ENCODE measurements at regions of chr5 and their contacts with region 1.

Region 1: DNA sequence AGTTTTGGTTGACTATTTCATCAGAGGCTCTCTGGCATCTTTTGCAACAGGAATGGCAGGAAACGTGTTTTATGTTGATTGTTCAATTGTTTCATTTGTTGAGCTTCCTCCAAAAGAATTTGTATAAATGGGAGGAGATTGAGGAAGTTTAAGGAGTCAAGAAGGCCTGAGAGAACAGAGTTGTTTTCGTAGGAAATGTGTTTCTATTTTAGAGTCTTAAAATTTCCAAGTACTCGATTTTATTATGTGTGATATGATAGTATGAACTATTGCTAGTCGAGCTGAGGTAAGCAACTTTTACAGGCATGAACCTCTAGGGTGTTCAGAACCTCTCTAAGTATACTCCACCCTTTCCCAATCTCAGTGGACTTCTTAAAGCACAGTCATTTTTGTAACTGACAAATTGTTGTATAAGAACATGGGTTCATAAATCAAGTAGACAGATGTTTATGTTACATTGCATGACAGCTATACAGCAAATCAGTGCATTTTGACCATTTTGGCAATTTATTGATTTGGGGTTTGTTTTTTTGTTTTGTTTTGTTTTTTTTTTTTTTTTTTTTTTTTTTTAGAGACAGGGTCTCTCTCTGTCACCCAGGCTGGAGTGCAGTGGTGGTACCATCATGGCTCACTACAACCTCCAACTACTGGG is 47.4 kb downstream of the POLK start:
- DNase-seq: no peak
- ATAC-seq: peak; percentile 44
- H3K4me3 ChIP-seq: no peak overlapping the region
- H3K27ac ChIP-seq: no peak overlapping the region
- H3K4me1 ChIP-seq: no peaks in the 10 kb centered on the region
- H3K27me3 ChIP-seq: no peaks in the 10 kb centered on the region
- CTCF ChIP-seq: no peak
- EP300 ChIP-seq: no peak
- POLR2A ChIP-seq: no peak
- RAD21 ChIP-seq: no peak

Region 2: GRCh38 chr5:74342948-74343682 is 1216.0 kb before region 1 on chr5:
- CTCF ChIA-PET with region 1: no interaction called
- POLR2A ChIA-PET with region 1: no interaction called
- RAD21 ChIA-PET with region 1: no interaction called
- SMC1A ChIA-PET with region 1: no interaction called
- in situ Hi-C with region 1: no loop called
- intact Hi-C with region 1: loop called (anchors 10 kb)
- DNase-seq: no peak
- ATAC-seq: no peak
- H3K4me3 ChIP-seq: no peak overlapping the region
- H3K27ac ChIP-seq: no peak overlapping the region
- H3K4me1 ChIP-seq: no peaks in the 10 kb centered on the region
- H3K27me3 ChIP-seq: no peaks in the 10 kb centered on the region
- CTCF ChIP-seq: no peak
- EP300 ChIP-seq: no peak
- POLR2A ChIP-seq: no peak
- RAD21 ChIP-seq: no peak